Activated CD4-positive, alpha-beta T cell treated with anti-CD3 and anti-CD28 coated beads, Interleukin-2, amount 10 ng/mL, durations not matched to agents 24 days and 14 days (primary cell): ENCODE measurements at regions of chr7 and their contacts with region 1.

Region 1: GRCh38 chr7:20299647-20300312 is 30.9 kb upstream of the ITGB8 start:
- DNase-seq: no peak
- H3K4me3 Mint-ChIP-seq: no peak overlapping the region
- H3K27ac Mint-ChIP-seq: no peak overlapping the region
- H3K4me1 Mint-ChIP-seq: peaks cover 3% of the 10 kb centered on the region
- H3K27me3 Mint-ChIP-seq: no peaks in the 10 kb centered on the region

Region 2: DNA sequence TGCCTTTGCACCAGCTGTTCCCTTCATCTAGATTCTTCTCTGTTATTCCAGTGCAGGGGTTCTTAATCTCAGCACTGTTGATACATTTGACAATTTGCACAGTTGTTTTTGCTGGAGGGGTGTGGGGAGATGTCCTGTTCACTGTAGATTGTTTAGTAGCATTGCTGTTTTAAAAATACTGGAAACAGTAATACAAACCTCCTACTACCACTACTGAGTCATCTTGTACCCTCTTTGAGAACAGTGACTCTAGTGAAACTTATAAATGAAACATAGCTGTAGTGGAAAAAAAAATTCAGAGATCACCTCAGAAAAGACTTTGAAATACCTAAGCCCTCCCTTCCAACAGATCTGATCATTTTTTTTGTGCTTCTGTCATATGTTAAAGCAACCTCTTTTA is 371.5 kb before region 1 on chr7:
- intact Hi-C with region 1: no loop called
- DNase-seq: no peak
- H3K4me3 Mint-ChIP-seq: no peak overlapping the region
- H3K27ac Mint-ChIP-seq: peak overlapping the region; percentile 58
- H3K4me1 Mint-ChIP-seq: peaks cover 3% of the 10 kb centered on the region
- H3K27me3 Mint-ChIP-seq: no peaks in the 10 kb centered on the region

Region 3: DNA sequence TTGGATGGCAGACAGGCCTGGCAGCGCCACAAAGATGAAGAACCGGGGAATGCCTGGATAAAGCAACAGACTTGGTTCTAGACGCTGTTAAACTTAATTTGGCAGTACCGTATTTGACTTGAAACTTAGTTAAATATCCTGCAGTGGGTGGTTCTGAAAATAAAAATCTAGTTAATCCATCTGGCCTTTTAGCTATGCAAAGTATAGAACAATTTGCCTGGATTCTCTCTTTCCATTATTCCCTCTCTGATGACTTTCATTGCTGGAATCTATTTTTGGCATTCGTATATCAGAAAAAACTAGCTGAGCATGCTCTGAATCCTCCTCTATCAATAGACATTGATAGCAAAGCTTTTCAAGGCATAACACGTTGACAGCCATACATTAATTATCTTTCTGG is 286.2 kb before region 1 on chr7:
- intact Hi-C with region 1: no loop called
- DNase-seq: no peak
- H3K4me3 Mint-ChIP-seq: no peak overlapping the region
- H3K27ac Mint-ChIP-seq: no peak overlapping the region
- H3K4me1 Mint-ChIP-seq: no peaks in the 10 kb centered on the region
- H3K27me3 Mint-ChIP-seq: no peaks in the 10 kb centered on the region

Region 4: GRCh38 chr7:20122073-20122472 is 177.7 kb before region 1 on chr7:
- intact Hi-C with region 1: no loop called
- DNase-seq: no peak
- H3K4me3 Mint-ChIP-seq: no peak overlapping the region
- H3K27ac Mint-ChIP-seq: no peak overlapping the region
- H3K4me1 Mint-ChIP-seq: no peaks in the 10 kb centered on the region
- H3K27me3 Mint-ChIP-seq: peaks cover 4% of the 10 kb centered on the region

Region 5: GRCh38 chr7:20280475-20281351 is 19.1 kb before region 1 on chr7:
- intact Hi-C with region 1: loop called (anchors 2 kb)
- DNase-seq: no peak
- H3K4me3 Mint-ChIP-seq: no peak overlapping the region
- H3K27ac Mint-ChIP-seq: no peak overlapping the region
- H3K4me1 Mint-ChIP-seq: no peaks in the 10 kb centered on the region
- H3K27me3 Mint-ChIP-seq: no peaks in the 10 kb centered on the region